ENCODE measurements at regions of chr2 and their contacts with region 1.

Region 1: DNA sequence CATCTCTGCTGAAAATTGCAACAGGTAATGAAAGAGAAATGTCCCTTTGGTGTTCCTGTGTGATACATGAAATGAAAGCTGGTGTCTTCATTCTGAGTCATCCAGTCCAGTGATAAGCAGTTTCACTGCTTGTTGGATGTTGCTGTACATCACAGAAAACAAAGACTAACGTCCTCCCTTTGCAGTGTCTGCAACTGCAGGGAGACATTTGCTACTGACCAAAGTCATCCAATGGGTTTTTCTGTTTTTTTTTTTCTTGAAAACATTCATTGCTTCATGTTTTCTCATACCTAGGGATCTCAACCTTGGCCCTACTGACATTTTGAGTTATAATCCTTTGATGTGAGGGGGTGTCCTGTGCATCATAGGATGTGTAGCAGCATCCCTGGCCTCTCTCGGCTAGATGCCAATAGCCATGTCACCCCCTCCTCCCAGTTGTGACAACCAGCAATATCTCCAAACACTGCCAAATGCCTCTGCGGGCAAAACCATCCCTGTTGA is 63.6 kb upstream of the FZD5 start:
- DNase-seq: no peak
- H3K4me3 ChIP-seq: no peak overlapping the region
- H3K27ac ChIP-seq: no peak overlapping the region
- H3K4me1 ChIP-seq: peaks cover 16% of the 10 kb centered on the region
- H3K27me3 ChIP-seq: no peaks in the 10 kb centered on the region
- CTCF ChIP-seq: no peak

Region 2: GRCh38 chr2:207759890-207760289 is 73.4 kb before region 1 on chr2:
- CTCF ChIA-PET with region 1: no interaction called
- POLR2A ChIA-PET with region 1: interaction called, 38 read pairs
- intact Hi-C with region 1: loop called (anchors 5 kb)
- DNase-seq: no peak
- H3K4me3 ChIP-seq: no peak overlapping the region
- H3K27ac ChIP-seq: no peak overlapping the region
- H3K4me1 ChIP-seq: no peaks in the 10 kb centered on the region
- H3K27me3 ChIP-seq: no peaks in the 10 kb centered on the region
- CTCF ChIP-seq: no peak

Region 3: DNA sequence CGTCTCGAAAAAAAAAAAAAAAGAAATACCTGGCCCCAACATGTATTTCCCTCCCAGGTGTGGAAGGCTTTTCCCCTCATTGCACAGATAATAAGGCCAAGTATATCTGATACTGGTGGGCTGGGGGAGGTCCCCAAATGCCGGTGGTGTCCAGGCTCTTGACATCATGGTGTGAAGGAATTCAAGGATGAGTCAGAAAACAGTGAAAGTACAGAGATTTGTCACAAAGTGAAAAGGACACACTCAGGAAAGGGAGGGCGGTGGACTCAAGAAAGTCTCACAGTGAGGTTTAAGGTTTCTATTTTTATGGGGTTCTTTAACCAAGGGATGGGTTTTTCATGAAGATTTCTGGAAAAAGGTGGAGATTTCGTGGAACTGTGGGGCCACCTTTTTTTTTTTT is 25.8 kb before region 1 on chr2:
- CTCF ChIA-PET with region 1: interaction called, 4 read pairs
- POLR2A ChIA-PET with region 1: no interaction called
- intact Hi-C with region 1: loop called (anchors 1 kb)
- DNase-seq: no peak
- H3K4me3 ChIP-seq: no peak overlapping the region
- H3K27ac ChIP-seq: no peak overlapping the region
- H3K4me1 ChIP-seq: peaks cover 32% of the 10 kb centered on the region
- H3K27me3 ChIP-seq: no peaks in the 10 kb centered on the region
- CTCF ChIP-seq: no peak

Measured in PC-9 (cell line).